ENCODE measurements at regions of chr11 and their contacts with region 1.

Region 1: DNA sequence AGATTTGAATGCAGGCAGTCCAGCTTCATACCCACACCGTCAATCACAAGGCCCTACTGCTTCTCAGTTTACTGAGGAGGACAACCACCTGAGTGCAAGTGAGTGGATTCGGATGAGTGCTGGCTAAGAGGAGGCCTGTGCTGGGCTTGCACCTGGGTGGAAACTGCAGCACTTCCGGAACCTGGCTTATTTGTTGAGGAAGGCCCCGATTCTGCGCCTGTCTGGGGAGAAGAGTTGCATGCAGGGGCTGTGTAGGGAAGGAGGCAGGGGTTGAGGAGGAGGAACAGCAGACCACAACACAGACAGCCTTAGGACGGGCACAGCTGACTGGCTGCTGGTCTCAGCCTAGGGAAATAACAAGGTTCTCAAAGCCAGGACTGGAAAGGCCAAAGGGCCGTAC is 20.8 kb downstream of the ABTB2 start:
- DNase-seq: no peak
- ATAC-seq: no peak
- H3K4me3 ChIP-seq: no peak overlapping the region
- H3K4me3 Mint-ChIP-seq: no peak overlapping the region
- H3K27ac ChIP-seq: no peak overlapping the region
- H3K27ac Mint-ChIP-seq: no peak overlapping the region
- H3K4me1 ChIP-seq: peaks cover 0 to 7% of the 10 kb centered on the region in 2 experiments
- H3K4me1 Mint-ChIP-seq: no peaks in the 10 kb centered on the region
- H3K27me3 ChIP-seq: no peaks in the 10 kb centered on the region
- H3K27me3 Mint-ChIP-seq: peaks cover 1 to 3% of the 10 kb centered on the region in 2 donors

Region 2: GRCh38 chr11:32899438-32899837 is 1437.6 kb before region 1 on chr11:
- CTCF ChIA-PET with region 1: interaction called in 1 of 2 experiments, 10 read pairs
- POLR2A ChIA-PET with region 1: no interaction called
- DNase-seq: no peak
- ATAC-seq: no peak
- H3K4me3 ChIP-seq: no peak overlapping the region
- H3K4me3 Mint-ChIP-seq: no peak overlapping the region
- H3K27ac ChIP-seq: no peak overlapping the region
- H3K27ac Mint-ChIP-seq: no peak overlapping the region
- H3K4me1 ChIP-seq: peaks cover 0 to 8% of the 10 kb centered on the region in 2 experiments
- H3K4me1 Mint-ChIP-seq: peaks cover 50 to 70% (median 54%) of the 10 kb centered on the region in 3 donors
- H3K27me3 ChIP-seq: no peaks in the 10 kb centered on the region
- H3K27me3 Mint-ChIP-seq: no peaks in the 10 kb centered on the region

Region 3: GRCh38 chr11:34395916-34396550 is 59.0 kb after region 1 on chr11:
- CTCF ChIA-PET with region 1: no interaction called
- POLR2A ChIA-PET with region 1: no interaction called
- DNase-seq: no peak
- ATAC-seq: no peak
- H3K4me3 ChIP-seq: no peak overlapping the region
- H3K4me3 Mint-ChIP-seq: no peak overlapping the region
- H3K27ac ChIP-seq: no peak overlapping the region
- H3K27ac Mint-ChIP-seq: no peak overlapping the region
- H3K4me1 ChIP-seq: no peaks in the 10 kb centered on the region
- H3K4me1 Mint-ChIP-seq: no peaks in the 10 kb centered on the region
- H3K27me3 ChIP-seq: peaks cover 0 to 19% of the 10 kb centered on the region in 2 experiments
- H3K27me3 Mint-ChIP-seq: peaks cover 12 to 53% of the 10 kb centered on the region in 2 donors

Region 4: DNA sequence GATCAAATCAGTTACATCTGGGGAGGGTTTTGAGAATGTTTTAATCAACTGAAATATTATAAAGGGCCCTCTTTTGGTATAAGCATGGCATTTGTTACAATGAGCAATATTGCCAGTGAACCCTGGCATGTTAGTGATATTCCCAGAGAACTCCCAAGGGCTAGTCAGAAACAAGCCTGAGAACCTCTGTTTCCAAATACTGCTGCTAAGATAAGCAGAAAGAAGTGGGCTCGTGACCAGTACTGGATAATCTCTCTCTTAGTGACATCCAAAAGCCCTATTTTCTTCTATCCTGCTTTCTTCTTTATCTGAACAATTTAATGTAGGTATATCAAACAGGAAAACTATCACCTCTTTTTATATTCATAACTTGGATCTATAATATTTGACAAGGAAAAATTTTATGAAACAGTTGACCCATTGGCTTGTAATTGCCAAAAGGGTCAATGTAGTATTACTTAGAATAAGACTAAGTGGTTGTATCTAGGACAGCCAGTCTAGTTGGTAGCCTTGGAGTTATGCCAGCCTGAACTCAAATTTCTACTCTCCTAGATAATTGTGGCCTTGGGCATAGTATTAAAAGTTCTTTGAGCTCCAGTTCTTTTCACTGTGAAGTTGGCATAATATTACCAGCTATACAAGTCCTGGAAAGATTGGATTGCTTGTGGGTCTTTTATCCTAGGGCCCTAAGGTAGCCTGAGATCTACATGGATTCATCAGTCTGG is 117.5 kb after region 1 on chr11:
- CTCF ChIA-PET with region 1: interaction called in 1 of 2 experiments, 12 read pairs
- POLR2A ChIA-PET with region 1: no interaction called
- DNase-seq: no peak
- ATAC-seq: no peak
- H3K4me3 ChIP-seq: no peak overlapping the region
- H3K4me3 Mint-ChIP-seq: no peak overlapping the region
- H3K27ac ChIP-seq: no peak overlapping the region
- H3K27ac Mint-ChIP-seq: no peak overlapping the region
- H3K4me1 ChIP-seq: no peaks in the 10 kb centered on the region
- H3K4me1 Mint-ChIP-seq: peaks cover 0 to 4% (median 2%) of the 10 kb centered on the region in 3 donors
- H3K27me3 ChIP-seq: no peaks in the 10 kb centered on the region
- H3K27me3 Mint-ChIP-seq: no peaks in the 10 kb centered on the region

Region 5: DNA sequence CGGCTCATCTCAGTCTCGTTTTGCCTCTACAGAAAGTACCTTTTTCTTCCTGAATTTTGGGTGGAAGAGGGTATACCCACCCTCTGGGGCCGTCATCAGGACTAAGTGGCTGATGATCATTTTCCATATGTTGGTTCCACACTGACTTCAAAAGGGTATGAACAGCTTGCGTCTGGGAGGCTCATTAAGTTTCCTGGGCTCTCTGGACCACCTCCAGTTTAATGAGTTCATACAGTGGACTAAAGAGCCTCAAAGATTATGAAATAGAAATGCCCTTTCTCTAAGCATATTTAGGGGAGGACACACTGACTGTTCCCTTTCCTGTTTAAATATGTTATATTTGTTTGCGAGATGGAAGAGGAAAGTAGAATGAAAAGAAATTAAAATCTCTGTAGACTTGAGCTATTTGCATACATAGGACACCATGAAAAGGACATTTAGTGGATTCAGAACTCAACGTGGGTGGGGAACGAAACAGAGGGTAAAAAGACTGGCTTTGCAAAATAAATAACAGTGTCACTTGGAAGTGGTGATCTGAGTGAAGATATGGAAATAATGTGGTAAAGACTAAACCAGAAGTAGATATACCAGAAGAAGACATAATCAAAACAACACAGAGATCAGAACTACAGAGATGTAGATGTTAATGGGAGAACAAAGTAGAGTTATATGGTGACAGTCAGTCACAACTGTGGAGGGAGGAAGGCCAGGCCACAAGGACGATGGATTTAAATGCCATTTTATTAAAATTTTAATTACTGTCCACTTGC is 1625.5 kb after region 1 on chr11:
- CTCF ChIA-PET with region 1: no interaction called
- POLR2A ChIA-PET with region 1: interaction called in 1 of 2 experiments, 16 read pairs
- DNase-seq: no peak
- ATAC-seq: no peak
- H3K4me3 ChIP-seq: no peak overlapping the region
- H3K4me3 Mint-ChIP-seq: no peak overlapping the region
- H3K27ac ChIP-seq: no peak overlapping the region
- H3K27ac Mint-ChIP-seq: no peak overlapping the region
- H3K4me1 ChIP-seq: no peaks in the 10 kb centered on the region
- H3K4me1 Mint-ChIP-seq: no peaks in the 10 kb centered on the region
- H3K27me3 ChIP-seq: peaks cover 0 to 12% of the 10 kb centered on the region in 2 experiments
- H3K27me3 Mint-ChIP-seq: peaks cover 0 to 4% of the 10 kb centered on the region in 2 donors

Measured in T-cell (primary cell).